WTC11 (cell line): ENCODE measurements at regions of chr13 and their contacts with region 1.

Region 1: GRCh38 chr13:72648513-72649065 is 78.8 kb downstream of the MZT1 start:
- DNase-seq: no peak
- ATAC-seq: peak; percentile 89
- H3K4me3 Mint-ChIP-seq: no peak overlapping the region
- H3K27ac Mint-ChIP-seq: no peak overlapping the region
- H3K4me1 Mint-ChIP-seq: 0 out of 2 replicates have a peak, but pooled peaks cover 4% of the 10 kb centered on the region
- H3K27me3 Mint-ChIP-seq: no peaks in the 10 kb centered on the region
- CTCF ChIP-seq: no peak; the same call in 1 of the 2 replicates

Region 2: DNA sequence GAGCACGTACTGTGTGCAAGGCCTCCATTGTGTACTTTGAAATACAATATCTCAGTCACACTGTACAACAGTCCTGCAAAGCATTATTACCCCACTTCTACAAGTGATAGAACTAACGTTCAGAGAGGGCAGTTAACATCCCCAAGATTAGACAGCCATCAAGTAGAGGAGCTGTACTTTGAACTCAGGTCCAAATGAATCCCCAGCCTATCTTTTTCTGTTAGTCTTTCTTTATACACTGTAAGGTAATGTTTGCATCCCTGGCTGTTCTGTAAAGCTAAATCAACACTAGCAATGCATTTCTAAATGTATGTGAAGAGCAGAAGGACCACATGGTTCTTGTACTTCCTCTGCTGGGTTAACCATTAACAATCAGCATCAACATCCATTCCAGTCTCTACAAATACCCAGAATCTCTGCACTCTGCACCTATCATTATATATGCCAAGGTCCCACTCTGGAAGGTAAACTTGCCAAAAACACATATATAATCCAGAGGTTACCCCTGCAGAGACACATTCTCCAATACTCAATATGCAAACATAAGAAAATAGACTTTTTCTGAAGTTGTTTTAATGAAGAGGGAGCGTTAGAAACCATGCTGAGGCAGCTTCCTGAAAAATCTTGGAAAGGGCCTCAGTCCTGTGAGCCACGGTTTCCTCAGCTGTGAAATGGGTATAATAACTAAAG is 103.4 kb before region 1 on chr13:
- CTCF ChIA-PET with region 1: no interaction called
- POLR2A ChIA-PET with region 1: no interaction called
- DNase-seq: no peak
- ATAC-seq: no peak
- H3K4me3 Mint-ChIP-seq: no peak overlapping the region
- H3K27ac Mint-ChIP-seq: no peak overlapping the region
- H3K4me1 Mint-ChIP-seq: no peaks in the 10 kb centered on the region
- H3K27me3 Mint-ChIP-seq: peaks cover 18% of the 10 kb centered on the region
- CTCF ChIP-seq: no peak

Region 3: DNA sequence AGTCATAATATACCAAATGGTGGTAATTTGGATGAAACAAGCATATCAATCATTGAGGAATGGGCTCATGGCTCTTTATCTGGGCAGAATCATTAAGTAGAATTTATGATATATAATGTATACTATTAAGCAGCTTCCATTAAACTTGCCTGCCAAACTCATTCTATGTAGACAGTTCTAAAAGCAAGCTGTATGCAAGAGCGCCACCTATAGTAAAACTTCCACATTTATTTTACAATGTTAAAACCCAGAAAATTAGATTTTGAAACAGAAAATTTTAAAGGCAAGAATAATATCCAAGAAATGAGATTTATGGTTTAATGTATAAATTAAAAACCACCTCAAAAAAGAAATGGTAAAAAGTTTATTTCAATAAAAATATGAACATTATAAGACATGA is 82.7 kb before region 1 on chr13:
- CTCF ChIA-PET with region 1: interaction called, 15 read pairs
- POLR2A ChIA-PET with region 1: no interaction called
- DNase-seq: no peak
- ATAC-seq: no peak
- H3K4me3 Mint-ChIP-seq: no peak overlapping the region
- H3K27ac Mint-ChIP-seq: no peak overlapping the region
- H3K4me1 Mint-ChIP-seq: peaks cover 12% of the 10 kb centered on the region
- H3K27me3 Mint-ChIP-seq: no peaks in the 10 kb centered on the region
- CTCF ChIP-seq: peak; percentile 67

Region 4: DNA sequence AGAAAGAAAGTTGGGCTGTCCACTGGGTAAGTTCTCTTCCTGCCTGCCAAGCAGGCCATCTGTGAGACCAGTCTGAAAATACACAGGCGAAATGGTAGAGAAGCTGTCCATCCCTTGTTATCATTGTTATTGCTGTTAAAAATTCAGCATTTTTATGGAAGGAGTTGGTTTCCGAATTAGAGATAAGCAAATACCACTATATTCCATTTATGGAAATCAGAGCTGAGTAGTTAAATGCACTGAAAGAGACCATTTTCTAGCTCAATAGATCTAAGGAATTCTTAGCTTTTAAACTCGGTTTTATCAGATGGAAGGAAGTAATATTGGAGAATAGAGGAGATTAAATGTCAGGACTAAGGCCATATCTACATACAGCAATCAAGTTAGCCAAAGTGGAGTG is 38.2 kb after region 1 on chr13:
- CTCF ChIA-PET with region 1: no interaction called
- POLR2A ChIA-PET with region 1: no interaction called
- DNase-seq: no peak
- ATAC-seq: no peak
- H3K4me3 Mint-ChIP-seq: no peak overlapping the region
- H3K27ac Mint-ChIP-seq: no peak overlapping the region
- H3K4me1 Mint-ChIP-seq: no peaks in the 10 kb centered on the region
- H3K27me3 Mint-ChIP-seq: no peaks in the 10 kb centered on the region
- CTCF ChIP-seq: no peak

Region 5: GRCh38 chr13:72774019-72774418 is 125.4 kb after region 1 on chr13:
- CTCF ChIA-PET with region 1: no interaction called
- POLR2A ChIA-PET with region 1: no interaction called
- DNase-seq: no peak
- ATAC-seq: no peak
- H3K4me3 Mint-ChIP-seq: no peak overlapping the region
- H3K27ac Mint-ChIP-seq: no peak overlapping the region
- H3K4me1 Mint-ChIP-seq: no peaks in the 10 kb centered on the region
- H3K27me3 Mint-ChIP-seq: no peaks in the 10 kb centered on the region
- CTCF ChIP-seq: no peak

Region 6: GRCh38 chr13:72884101-72884500 is 235.5 kb after region 1 on chr13:
- CTCF ChIA-PET with region 1: no interaction called
- POLR2A ChIA-PET with region 1: no interaction called
- DNase-seq: no peak
- ATAC-seq: no peak
- H3K4me3 Mint-ChIP-seq: no peak overlapping the region
- H3K27ac Mint-ChIP-seq: no peak overlapping the region
- H3K4me1 Mint-ChIP-seq: no peaks in the 10 kb centered on the region
- H3K27me3 Mint-ChIP-seq: no peaks in the 10 kb centered on the region
- CTCF ChIP-seq: no peak